HEK293 (cell line): ENCODE measurements at regions of chr20 and their contacts with region 1.

Region 1: GRCh38 chr20:21235484-21236445 is 67.4 kb upstream of the XRN2 start:
- H3K4me3 ChIP-seq: no peak overlapping the region
- H3K27ac ChIP-seq: no peak overlapping the region
- H3K4me1 ChIP-seq: no peaks in the 10 kb centered on the region
- CTCF ChIP-seq: peak; percentile 60

Region 2: DNA sequence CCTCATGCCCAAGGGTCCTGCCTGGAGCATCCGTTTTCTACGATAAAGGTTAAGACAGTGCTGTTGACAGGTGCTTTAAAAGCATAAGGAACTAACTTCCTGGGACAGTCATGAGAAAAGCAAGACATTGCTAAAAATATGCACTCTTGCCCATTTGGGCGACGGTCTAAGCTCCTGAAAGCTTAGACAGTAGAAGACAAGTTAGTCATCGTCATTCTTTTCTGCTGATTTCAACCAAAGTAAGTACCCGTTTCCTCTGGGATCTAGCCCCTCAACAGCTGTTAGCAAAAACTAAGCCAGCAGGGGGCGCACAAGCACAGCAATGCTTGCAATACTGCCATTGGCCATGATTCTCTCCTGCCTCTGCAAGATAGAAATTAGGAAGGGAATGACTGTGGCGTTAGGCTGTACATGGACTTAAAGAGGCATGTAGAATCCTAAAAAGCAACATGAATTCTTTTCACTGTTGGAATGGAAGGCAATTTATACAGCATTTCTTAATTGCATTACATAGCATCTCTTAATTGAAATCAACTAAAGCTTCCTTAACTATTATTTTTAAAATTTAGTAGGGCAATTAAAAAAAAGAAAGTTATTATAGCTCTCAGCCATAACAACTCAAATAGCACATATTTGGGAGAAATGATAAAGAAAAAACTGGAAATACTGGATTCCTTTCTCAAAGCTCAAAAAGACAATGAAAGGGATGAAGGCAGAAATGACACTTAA is 375.5 kb before region 1 on chr20:
- CTCF ChIA-PET with region 1: interaction called, 34 read pairs
- POLR2A ChIA-PET with region 1: no interaction called
- H3K4me3 ChIP-seq: no peak overlapping the region
- H3K27ac ChIP-seq: no peak overlapping the region
- H3K4me1 ChIP-seq: no peaks in the 10 kb centered on the region
- CTCF ChIP-seq: peak; percentile 88

Region 3: DNA sequence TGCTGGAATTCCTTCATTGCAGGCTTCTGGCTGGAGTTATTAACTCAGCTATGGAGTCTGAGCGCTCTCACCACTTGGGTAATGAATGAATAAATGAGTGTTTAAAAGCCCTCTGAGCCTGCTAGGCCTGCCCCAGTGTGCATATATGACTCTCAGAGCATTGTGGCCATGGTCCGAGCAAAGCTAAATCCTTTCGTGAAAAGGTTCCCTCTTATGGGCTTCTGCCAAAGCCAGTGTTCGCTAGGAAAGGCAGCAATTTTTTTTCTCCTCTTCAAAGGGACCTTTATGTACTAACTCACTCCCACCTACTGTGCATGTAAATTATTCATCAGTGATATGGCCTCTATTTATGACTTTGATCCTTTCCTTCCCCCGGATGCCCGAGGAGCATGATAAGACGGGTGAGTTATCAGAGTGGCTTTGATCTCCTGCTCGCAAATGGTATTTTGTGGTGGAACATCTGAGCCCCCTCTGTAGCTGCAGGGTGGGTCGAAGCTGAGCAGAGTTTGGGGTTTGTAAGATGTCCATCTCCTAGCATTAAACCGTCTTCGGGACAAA is 218.2 kb before region 1 on chr20:
- CTCF ChIA-PET with region 1: no interaction called
- POLR2A ChIA-PET with region 1: no interaction called
- H3K4me3 ChIP-seq: no peak overlapping the region
- H3K27ac ChIP-seq: no peak overlapping the region
- H3K4me1 ChIP-seq: no peaks in the 10 kb centered on the region
- CTCF ChIP-seq: no peak

Region 4: DNA sequence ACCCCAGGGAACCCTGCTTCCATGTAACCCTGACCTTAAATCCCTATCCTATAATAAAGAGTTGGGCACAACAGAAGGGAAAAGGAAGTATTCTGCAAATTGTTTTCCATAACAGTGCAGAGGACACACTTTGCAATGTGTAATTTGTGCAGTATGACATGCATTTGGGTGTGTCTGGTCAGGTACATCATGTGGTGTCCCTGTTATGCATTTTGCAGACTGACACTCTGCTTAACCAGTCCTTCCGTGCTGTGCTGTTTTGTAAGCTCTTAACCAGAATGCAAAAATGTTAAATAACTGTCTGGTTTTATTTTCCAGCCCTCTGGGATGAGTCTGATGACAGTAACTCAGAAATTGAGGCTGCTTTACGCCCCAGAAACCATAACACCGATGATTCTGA is 10.4 kb after region 1 on chr20:
- CTCF ChIA-PET with region 1: interaction called, 22 read pairs
- POLR2A ChIA-PET with region 1: no interaction called
- H3K4me3 ChIP-seq: no peak overlapping the region
- H3K27ac ChIP-seq: no peak overlapping the region
- H3K4me1 ChIP-seq: no peaks in the 10 kb centered on the region
- CTCF ChIP-seq: no peak

Region 5: DNA sequence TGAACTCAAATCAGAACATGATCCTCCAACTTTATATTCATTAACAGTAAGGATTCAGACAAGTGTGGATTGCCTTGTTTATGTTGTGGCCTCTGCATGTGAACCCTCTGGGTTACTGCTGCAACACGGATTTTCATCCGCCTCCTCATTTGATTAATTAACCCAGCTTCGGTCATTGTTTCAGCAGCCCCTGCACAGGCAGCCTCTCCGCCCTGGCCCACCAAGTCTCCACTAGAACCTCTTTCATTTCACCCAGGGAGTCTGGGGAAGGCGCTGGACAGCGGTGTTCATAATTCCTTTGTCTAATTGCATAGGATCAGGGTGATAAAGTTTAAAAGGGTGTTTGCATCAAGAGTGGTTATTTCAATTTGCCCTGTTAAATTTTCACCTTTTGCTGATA is 262.4 kb after region 1 on chr20:
- CTCF ChIA-PET with region 1: interaction called, 150 read pairs
- POLR2A ChIA-PET with region 1: interaction called, 3 read pairs
- H3K4me3 ChIP-seq: no peak overlapping the region
- H3K27ac ChIP-seq: no peak overlapping the region
- H3K4me1 ChIP-seq: no peaks in the 10 kb centered on the region; the same call in 1 of the 2 replicates
- CTCF ChIP-seq: no peak

Region 6: GRCh38 chr20:21520702-21521595 is 285.2 kb after region 1 on chr20:
- CTCF ChIA-PET with region 1: interaction called, 49 read pairs
- POLR2A ChIA-PET with region 1: no interaction called
- H3K4me3 ChIP-seq: peak overlapping the region; percentile 50
- H3K27ac ChIP-seq: peak overlapping the region; percentile 72; the same call in 1 of the 2 replicates
- H3K4me1 ChIP-seq: peaks cover 3% of the 10 kb centered on the region; the same call in 1 of the 2 replicates
- CTCF ChIP-seq: peak; percentile 94

Region 7: GRCh38 chr20:21615617-21616080 is 379.9 kb after region 1 on chr20:
- CTCF ChIA-PET with region 1: interaction called, 28 read pairs
- POLR2A ChIA-PET with region 1: no interaction called
- H3K4me3 ChIP-seq: no peak overlapping the region
- H3K27ac ChIP-seq: no peak overlapping the region
- H3K4me1 ChIP-seq: 0 out of 2 replicates have a peak, but pooled peaks cover 4% of the 10 kb centered on the region
- CTCF ChIP-seq: peak; percentile 75